ENCODE measurements at regions of chr4 and their contacts with region 1.

Region 1: DNA sequence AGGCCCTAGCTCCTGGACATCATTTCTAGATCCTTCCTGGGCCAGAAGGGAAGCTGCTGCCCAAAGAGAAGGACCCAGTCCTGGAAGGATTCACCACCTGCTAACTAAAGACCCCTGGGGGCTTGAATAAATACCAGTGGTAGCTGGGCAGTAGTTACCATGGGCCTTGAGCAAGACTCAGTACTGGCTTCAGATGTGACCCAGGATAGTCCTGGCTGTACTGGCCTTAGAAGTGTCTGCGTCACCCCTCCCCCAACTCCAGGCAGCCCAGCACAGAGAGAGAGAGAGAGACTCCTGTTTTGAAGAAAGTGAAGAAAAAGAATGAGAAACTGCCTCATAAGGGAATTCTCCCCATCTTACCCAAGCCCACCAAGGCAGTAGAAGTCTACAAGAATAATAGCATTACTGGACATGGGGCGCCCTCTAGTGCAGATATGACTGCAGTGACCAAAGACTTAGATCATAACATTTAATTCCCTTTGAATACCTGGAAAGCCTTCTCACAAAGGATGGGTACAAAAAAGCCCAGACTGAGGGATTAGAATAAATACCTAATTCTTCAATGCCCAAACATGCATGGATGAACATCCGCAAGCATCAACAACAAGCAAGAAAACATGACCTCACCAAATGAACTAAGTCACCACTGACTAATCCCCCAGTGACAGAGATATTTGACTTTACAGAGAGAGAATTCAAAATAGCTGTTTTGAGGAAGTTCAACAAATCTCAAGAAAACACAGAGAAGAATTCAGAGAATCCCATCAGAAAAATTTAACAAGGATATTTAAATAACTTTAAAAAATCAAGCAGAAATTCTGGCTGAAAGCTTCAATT is 171.8 kb downstream of the HNRNPD start:
- DNase-seq: no peak
- ATAC-seq: peak; percentile 81
- H3K4me3 ChIP-seq: no peak overlapping the region
- H3K27ac ChIP-seq: no peak overlapping the region
- H3K4me1 ChIP-seq: no peaks in the 10 kb centered on the region
- H3K27me3 ChIP-seq: no peaks in the 10 kb centered on the region
- CTCF ChIP-seq: peak; percentile 56 to 65 (median 60)
- EP300 ChIP-seq: no peak
- POLR2A ChIP-seq: no peak
- RAD21 ChIP-seq: peak; percentile 85

Region 2: DNA sequence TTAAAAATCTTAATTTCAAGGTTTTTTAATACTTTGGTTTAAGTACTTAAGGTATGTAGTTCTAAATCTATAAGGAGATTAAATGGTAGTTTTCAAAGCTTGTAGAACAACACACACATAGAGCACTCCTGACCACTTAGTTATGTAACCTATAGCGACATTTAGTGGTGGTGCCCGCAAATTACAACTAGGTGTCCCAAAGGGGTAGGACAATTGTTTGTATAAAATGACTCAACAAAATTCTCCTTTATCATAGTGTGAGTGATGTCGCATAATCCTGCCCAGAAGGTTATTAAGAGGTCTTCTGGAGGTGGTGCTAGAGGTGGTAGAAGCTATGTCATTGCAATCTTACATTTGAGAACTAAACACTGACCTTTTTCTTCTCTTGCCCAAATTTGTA is 357.3 kb before region 1 on chr4:
- CTCF ChIA-PET with region 1: interaction called, 3 read pairs
- POLR2A ChIA-PET with region 1: no interaction called
- RAD21 ChIA-PET with region 1: no interaction called
- SMC1A ChIA-PET with region 1: no interaction called
- in situ Hi-C with region 1: no loop called
- intact Hi-C with region 1: loop called (anchors 2 kb)
- DNase-seq: peak; percentile 12
- ATAC-seq: peak; percentile 93
- H3K4me3 ChIP-seq: no peak overlapping the region
- H3K27ac ChIP-seq: no peak overlapping the region
- H3K4me1 ChIP-seq: no peaks in the 10 kb centered on the region
- H3K27me3 ChIP-seq: no peaks in the 10 kb centered on the region; a peak in 1 of 4 replicates
- CTCF ChIP-seq: peak; percentile 74 to 81 (median 77)
- EP300 ChIP-seq: no peak
- POLR2A ChIP-seq: no peak
- RAD21 ChIP-seq: peak; percentile 90

Region 3: GRCh38 chr4:81913427-81913879 is 288.6 kb before region 1 on chr4:
- CTCF ChIA-PET with region 1: no interaction called
- POLR2A ChIA-PET with region 1: no interaction called
- RAD21 ChIA-PET with region 1: no interaction called
- SMC1A ChIA-PET with region 1: no interaction called
- in situ Hi-C with region 1: no loop called
- intact Hi-C with region 1: loop called (anchors 5 kb)
- DNase-seq: no peak
- ATAC-seq: peak; percentile 94
- H3K4me3 ChIP-seq: no peak overlapping the region
- H3K27ac ChIP-seq: no peak overlapping the region
- H3K4me1 ChIP-seq: no peaks in the 10 kb centered on the region
- H3K27me3 ChIP-seq: no peaks in the 10 kb centered on the region
- CTCF ChIP-seq: peak; percentile 71 to 84 (median 74)
- EP300 ChIP-seq: no peak
- POLR2A ChIP-seq: no peak
- RAD21 ChIP-seq: peak; percentile 31; the same call in 1 of the 2 replicates

Measured in GM12878 (cell line).